Dendritic cell treated with granulocyte-macrophage colony-stimulating factor and Interleukin-4, amounts not matched to agents 40 ng/mL and 50 ng/mL, for 4 days (primary cell): ENCODE measurements at regions of chr6 and their contacts with region 1.

Region 1: GRCh38 chr6:6793388-6794250 is 205.1 kb downstream of the LY86 start:
- H3K4me3 Mint-ChIP-seq: peak overlapping the region; percentile 71
- H3K27ac Mint-ChIP-seq: peak overlapping the region; percentile 98
- H3K4me1 Mint-ChIP-seq: peaks cover 95% of the 10 kb centered on the region
- H3K27me3 Mint-ChIP-seq: no peaks in the 10 kb centered on the region

Region 2: DNA sequence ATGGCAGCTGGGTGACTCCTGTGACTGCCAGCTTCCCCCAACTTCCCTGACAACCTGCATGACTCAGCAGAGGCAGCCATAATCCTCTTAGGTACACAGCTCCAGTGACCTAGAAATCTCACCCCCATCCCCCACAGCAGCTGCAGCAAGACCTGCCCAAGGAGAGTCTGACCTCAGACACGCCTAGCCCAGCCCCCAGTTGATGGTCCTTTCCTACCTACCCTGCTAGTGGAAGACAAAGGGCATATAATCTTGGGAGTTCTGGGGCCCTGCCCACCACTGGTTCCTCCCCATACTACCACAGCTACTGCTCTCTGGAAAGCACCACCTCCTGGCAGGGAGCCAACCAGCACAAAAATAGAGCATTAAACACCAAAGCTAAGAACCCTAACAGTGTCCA is 563.3 kb before region 1 on chr6:
- intact Hi-C with region 1: no loop called
- H3K4me3 Mint-ChIP-seq: no peak overlapping the region
- H3K27ac Mint-ChIP-seq: peak overlapping the region; percentile 63
- H3K4me1 Mint-ChIP-seq: peaks cover 63% of the 10 kb centered on the region
- H3K27me3 Mint-ChIP-seq: no peaks in the 10 kb centered on the region

Region 3: GRCh38 chr6:6749702-6750491 is 43.7 kb before region 1 on chr6:
- intact Hi-C with region 1: loop called (anchors 2 kb)
- H3K4me3 Mint-ChIP-seq: peak overlapping the region; percentile 74
- H3K27ac Mint-ChIP-seq: peak overlapping the region; percentile 91
- H3K4me1 Mint-ChIP-seq: peaks cover 66% of the 10 kb centered on the region
- H3K27me3 Mint-ChIP-seq: no peaks in the 10 kb centered on the region

Region 4: GRCh38 chr6:6890400-6890858 is 96.8 kb after region 1 on chr6:
- intact Hi-C with region 1: no loop called
- H3K4me3 Mint-ChIP-seq: peak overlapping the region; percentile 62
- H3K27ac Mint-ChIP-seq: peak overlapping the region; percentile 73
- H3K4me1 Mint-ChIP-seq: peaks cover 74% of the 10 kb centered on the region
- H3K27me3 Mint-ChIP-seq: no peaks in the 10 kb centered on the region

Region 5: GRCh38 chr6:7051233-7052114 is 257.9 kb after region 1 on chr6:
- intact Hi-C with region 1: loop called (anchors 5 kb)
- H3K4me3 Mint-ChIP-seq: peak overlapping the region; percentile 79
- H3K27ac Mint-ChIP-seq: peak overlapping the region; percentile 88
- H3K4me1 Mint-ChIP-seq: peaks cover 51% of the 10 kb centered on the region
- H3K27me3 Mint-ChIP-seq: no peaks in the 10 kb centered on the region

Region 6: DNA sequence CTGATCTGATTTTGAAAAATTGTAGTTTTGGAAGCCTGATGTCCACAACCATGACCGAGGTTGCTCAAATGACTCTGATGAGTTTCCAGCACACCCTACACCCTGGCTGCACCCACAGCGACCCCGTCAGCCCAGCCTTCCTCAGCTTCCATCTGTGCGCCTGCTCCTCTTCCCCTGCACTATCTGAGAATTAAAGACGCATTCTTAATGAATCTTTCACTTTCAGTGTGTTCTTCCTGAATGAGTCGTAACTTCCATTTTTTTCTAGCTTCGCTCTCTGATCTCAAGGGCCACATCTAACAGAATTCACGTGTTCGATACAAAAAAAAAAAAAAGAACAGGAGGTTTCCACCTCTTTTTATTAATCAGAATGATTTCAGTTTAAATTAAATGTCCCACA is 292.9 kb after region 1 on chr6:
- intact Hi-C with region 1: no loop called
- H3K4me3 Mint-ChIP-seq: peak overlapping the region; percentile 59
- H3K27ac Mint-ChIP-seq: peak overlapping the region; percentile 81
- H3K4me1 Mint-ChIP-seq: peaks cover 32% of the 10 kb centered on the region
- H3K27me3 Mint-ChIP-seq: no peaks in the 10 kb centered on the region

Region 7: DNA sequence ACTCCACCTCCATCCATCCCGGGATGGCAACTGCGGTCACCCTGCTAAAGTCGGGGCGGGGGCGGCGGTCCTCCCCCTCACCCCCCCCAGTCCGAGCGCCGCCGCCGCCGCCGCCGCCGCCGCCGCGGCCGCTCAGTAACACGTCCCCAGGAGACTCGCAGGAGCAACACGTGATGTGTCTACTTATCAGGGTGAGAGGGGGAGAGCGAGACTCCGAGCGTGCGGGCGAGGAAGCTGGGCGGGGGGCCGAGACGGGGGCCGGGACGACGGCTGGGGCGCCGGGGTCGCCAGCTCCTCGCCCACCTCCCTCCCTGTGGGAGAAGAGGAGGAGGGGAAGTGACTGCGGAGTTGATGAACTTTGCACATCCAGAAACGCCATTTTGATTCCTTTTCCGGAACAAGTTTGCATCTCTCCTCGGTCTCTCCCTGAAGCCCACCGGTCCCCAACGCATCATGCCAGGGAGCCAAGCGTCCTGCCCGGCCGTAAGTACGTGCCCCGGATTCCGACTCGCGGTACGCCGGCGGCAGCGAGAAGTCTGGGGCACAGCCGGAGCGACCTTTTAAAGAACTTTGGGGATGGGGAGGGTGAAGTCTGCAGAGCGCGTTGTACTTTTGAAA is 314.1 kb after region 1 on chr6 and contains the start of gene RREB1:
- intact Hi-C with region 1: loop called (anchors 5 kb)
- H3K4me3 Mint-ChIP-seq: peak within 1 kb of the TSS; percentile 98
- H3K27ac Mint-ChIP-seq: peak within 1 kb of the TSS; percentile 99
- H3K4me1 Mint-ChIP-seq: peaks cover 36% of the 10 kb centered on the region
- H3K27me3 Mint-ChIP-seq: no peaks in the 10 kb centered on the region